A673 (cell line): ENCODE measurements at regions of chr7 and their contacts with region 1.

Region 1: DNA sequence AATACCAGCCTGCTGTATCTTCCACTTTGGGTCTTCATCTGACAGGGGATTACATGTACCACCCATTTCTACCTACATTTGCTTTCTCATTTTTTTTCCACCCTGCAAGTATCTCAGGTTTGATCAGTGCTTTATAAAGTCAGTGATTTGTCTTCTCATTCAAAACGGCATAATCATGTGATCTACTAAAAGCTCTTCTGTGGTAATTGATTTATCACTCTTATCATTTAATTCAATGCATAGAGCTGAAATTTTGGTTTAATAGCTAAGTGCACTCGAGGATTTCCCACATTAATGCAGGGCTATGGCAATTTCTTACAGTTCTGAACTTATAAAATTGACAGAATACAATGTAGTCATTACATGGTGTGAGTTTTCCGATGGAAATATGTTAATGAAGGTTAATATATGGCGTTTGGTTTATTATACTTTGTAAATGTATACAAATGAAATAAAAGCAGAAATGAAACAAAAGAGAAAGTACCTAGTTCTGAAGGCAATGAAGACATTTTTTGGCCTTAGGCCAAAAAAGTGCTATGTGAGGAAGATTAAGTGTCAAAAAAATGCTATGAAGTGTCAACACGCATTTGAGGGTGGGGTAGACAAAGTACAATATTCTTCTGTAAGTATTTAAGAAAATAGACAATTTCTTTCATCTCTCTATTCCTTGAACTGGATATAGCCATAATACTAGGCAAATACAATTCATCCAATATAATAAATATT is 457.3 kb downstream of the ETV1 start:
- DNase-seq: peak; percentile 25
- H3K4me3 ChIP-seq: no peak overlapping the region
- H3K27ac ChIP-seq: no peak overlapping the region
- H3K4me1 ChIP-seq: no peaks in the 10 kb centered on the region
- H3K27me3 ChIP-seq: no peaks in the 10 kb centered on the region
- CTCF ChIP-seq: no peak

Region 2: GRCh38 chr7:13882046-13882445 is 349.9 kb after region 1 on chr7:
- CTCF ChIA-PET with region 1: no interaction called
- POLR2A ChIA-PET with region 1: no interaction called
- intact Hi-C with region 1: no loop called
- DNase-seq: no peak
- H3K4me3 ChIP-seq: no peak overlapping the region
- H3K27ac ChIP-seq: no peak overlapping the region
- H3K4me1 ChIP-seq: no peaks in the 10 kb centered on the region
- H3K27me3 ChIP-seq: no peaks in the 10 kb centered on the region
- CTCF ChIP-seq: no peak

Region 3: DNA sequence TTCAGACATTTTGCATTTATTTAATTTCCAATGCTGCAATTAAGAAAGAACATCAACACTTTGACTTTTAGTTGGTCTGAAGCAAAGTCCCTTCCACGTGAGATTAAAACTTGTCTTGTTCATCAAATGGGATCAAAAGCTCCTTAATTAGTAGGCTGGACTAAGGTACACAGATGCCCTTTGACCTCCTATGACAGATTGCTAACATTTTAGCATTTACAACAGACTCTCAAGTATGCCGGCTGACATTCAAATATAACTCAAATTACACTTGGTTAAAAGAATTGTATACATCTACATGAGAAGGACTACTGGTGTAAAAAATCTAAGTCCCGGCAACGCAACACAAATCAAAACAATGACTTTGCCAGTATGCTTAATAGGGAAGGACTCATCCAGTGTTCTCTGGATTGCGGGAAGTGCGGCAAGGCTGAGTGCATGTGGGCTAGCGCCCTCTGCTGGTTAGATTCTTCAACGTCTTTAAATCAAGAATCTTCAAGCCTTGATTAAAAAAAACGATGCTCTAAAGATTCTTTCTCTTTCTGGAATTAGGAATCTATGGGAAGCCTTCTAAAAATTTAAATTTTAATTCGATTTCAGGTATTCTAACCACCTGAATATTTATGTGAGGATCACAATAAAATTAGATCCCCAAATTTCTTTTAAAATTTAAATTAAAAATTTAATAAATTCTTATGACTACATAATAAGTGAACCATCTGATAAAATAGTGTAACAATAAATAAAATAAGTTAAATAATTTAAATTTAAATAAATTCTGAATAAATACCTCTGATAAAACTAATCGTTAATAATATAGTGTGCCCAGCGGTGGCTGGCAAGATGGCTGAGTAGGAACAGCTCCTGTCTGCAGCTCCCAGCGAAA is 925.6 kb after region 1 on chr7:
- CTCF ChIA-PET with region 1: no interaction called
- POLR2A ChIA-PET with region 1: no interaction called
- intact Hi-C with region 1: loop called (anchors 5 kb)
- DNase-seq: peak; percentile 88
- H3K4me3 ChIP-seq: peak overlapping the region; percentile 15
- H3K27ac ChIP-seq: no peak overlapping the region
- H3K4me1 ChIP-seq: no peaks in the 10 kb centered on the region
- H3K27me3 ChIP-seq: no peaks in the 10 kb centered on the region
- CTCF ChIP-seq: peak; percentile 86

Region 4: GRCh38 chr7:14691597-14692203 is 1159.5 kb after region 1 on chr7:
- CTCF ChIA-PET with region 1: no interaction called
- POLR2A ChIA-PET with region 1: no interaction called
- intact Hi-C with region 1: loop called (anchors 2 kb)
- DNase-seq: peak; percentile 61
- H3K4me3 ChIP-seq: no peak overlapping the region
- H3K27ac ChIP-seq: no peak overlapping the region
- H3K4me1 ChIP-seq: peaks cover 4% of the 10 kb centered on the region
- H3K27me3 ChIP-seq: no peaks in the 10 kb centered on the region
- CTCF ChIP-seq: peak; percentile 92

Region 5: DNA sequence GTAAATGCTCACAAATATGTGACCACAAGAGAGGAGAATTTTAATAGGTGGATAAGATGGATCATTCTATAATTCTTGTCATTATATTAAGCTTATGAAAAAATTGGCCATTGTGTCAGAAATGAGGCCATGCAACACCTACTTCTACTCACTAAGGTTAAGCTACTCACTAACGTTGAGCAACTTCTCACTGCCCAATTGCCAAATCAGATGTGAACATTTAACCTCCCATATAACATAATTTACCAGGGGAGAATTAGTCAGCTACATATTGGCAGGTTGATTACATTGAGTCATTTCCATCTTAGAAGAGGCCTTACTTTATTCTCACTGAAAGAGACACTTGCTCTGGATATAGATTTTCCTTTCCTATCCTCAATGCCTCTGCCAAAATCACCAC is 1581.6 kb after region 1 on chr7:
- CTCF ChIA-PET with region 1: no interaction called
- POLR2A ChIA-PET with region 1: interaction called, 10 read pairs
- intact Hi-C with region 1: no loop called
- DNase-seq: no peak
- H3K4me3 ChIP-seq: no peak overlapping the region
- H3K27ac ChIP-seq: no peak overlapping the region
- H3K4me1 ChIP-seq: no peaks in the 10 kb centered on the region
- H3K27me3 ChIP-seq: peaks cover 3% of the 10 kb centered on the region
- CTCF ChIP-seq: no peak